Caco-2 (cell line): ENCODE measurements at regions of chr17 and their contacts with region 1.

Region 1: GRCh38 chr17:50956750-50957523 is 90.8 kb upstream of the TOB1 start:
- DNase-seq: peak; percentile 86 to 87
- H3K4me3 ChIP-seq: no peak overlapping the region
- H3K4me3 Mint-ChIP-seq: no peak overlapping the region
- H3K27ac Mint-ChIP-seq: no peak overlapping the region
- H3K4me1 ChIP-seq: peaks cover 9% of the 10 kb centered on the region
- H3K4me1 Mint-ChIP-seq: peaks cover 13% of the 10 kb centered on the region
- H3K27me3 ChIP-seq: no peaks in the 10 kb centered on the region
- H3K27me3 Mint-ChIP-seq: no peaks in the 10 kb centered on the region
- CTCF ChIP-seq: peak; percentile 96 to 98

Region 2: DNA sequence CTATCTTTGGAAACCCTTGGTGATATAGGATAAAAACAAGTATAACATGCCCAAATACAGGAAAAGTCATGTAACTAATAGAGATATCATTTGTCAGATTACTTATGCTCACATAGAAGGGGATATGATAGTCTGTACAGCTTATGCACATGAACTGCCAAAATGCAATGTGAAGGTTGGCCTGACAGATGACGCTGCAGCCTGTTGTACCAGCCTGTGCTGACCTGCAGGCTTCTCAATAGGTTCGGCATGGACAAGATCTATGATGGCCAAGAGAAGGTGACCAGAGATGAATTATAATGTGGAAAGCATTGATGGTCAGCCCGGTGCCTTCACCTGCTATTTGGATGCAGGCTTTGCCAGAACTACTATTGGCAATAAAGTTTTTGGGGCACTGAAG is 108.9 kb before region 1 on chr17:
- CTCF ChIA-PET with region 1: interaction called, 186 read pairs
- POLR2A ChIA-PET with region 1: interaction called, 14 read pairs
- intact Hi-C with region 1: loop called (anchors 1 kb)
- DNase-seq: peak in 1 of 2 experiments; percentile 29
- H3K4me3 ChIP-seq: no peak overlapping the region
- H3K4me3 Mint-ChIP-seq: no peak overlapping the region
- H3K27ac Mint-ChIP-seq: no peak overlapping the region
- H3K4me1 ChIP-seq: peaks cover 31% of the 10 kb centered on the region
- H3K4me1 Mint-ChIP-seq: peaks cover 19% of the 10 kb centered on the region
- H3K27me3 ChIP-seq: no peaks in the 10 kb centered on the region
- H3K27me3 Mint-ChIP-seq: no peaks in the 10 kb centered on the region
- CTCF ChIP-seq: no peak

Region 3: DNA sequence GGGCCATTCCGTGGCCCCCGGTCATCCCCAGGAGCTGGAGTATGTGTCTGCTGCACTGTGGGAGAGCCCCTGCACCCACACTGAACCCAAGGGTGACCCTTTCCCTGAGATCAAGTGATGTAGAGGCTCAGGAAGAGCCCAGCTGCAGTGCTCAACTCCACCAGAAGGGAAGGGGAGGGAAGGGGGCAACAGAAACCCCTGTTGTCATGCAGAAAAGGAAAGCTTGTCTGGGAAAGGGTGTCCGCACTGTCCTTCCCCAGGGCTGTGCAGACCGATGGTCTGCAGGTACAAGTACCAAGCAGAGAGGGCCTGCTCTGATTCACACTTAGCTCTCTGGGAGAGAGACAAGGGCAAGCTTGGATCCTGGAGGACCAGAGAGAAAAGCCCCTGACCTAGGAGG is 45.0 kb before region 1 on chr17:
- CTCF ChIA-PET with region 1: no interaction called
- POLR2A ChIA-PET with region 1: no interaction called
- intact Hi-C with region 1: no loop called
- DNase-seq: no peak
- H3K4me3 ChIP-seq: no peak overlapping the region
- H3K4me3 Mint-ChIP-seq: no peak overlapping the region
- H3K27ac Mint-ChIP-seq: no peak overlapping the region
- H3K4me1 ChIP-seq: peaks cover 42% of the 10 kb centered on the region
- H3K4me1 Mint-ChIP-seq: peaks cover 52% of the 10 kb centered on the region
- H3K27me3 ChIP-seq: no peaks in the 10 kb centered on the region
- H3K27me3 Mint-ChIP-seq: no peaks in the 10 kb centered on the region
- CTCF ChIP-seq: peak; percentile 13 to 55

Region 4: GRCh38 chr17:50993544-50993943 is 36.6 kb after region 1 on chr17:
- CTCF ChIA-PET with region 1: no interaction called
- POLR2A ChIA-PET with region 1: interaction called, 3 read pairs
- intact Hi-C with region 1: loop called (anchors 5 kb)
- DNase-seq: no peak
- H3K4me3 ChIP-seq: no peak overlapping the region
- H3K4me3 Mint-ChIP-seq: no peak overlapping the region
- H3K27ac Mint-ChIP-seq: no peak overlapping the region
- H3K4me1 ChIP-seq: no peaks in the 10 kb centered on the region
- H3K4me1 Mint-ChIP-seq: peaks cover 6% of the 10 kb centered on the region
- H3K27me3 ChIP-seq: no peaks in the 10 kb centered on the region
- H3K27me3 Mint-ChIP-seq: no peaks in the 10 kb centered on the region
- CTCF ChIP-seq: no peak

Region 5: DNA sequence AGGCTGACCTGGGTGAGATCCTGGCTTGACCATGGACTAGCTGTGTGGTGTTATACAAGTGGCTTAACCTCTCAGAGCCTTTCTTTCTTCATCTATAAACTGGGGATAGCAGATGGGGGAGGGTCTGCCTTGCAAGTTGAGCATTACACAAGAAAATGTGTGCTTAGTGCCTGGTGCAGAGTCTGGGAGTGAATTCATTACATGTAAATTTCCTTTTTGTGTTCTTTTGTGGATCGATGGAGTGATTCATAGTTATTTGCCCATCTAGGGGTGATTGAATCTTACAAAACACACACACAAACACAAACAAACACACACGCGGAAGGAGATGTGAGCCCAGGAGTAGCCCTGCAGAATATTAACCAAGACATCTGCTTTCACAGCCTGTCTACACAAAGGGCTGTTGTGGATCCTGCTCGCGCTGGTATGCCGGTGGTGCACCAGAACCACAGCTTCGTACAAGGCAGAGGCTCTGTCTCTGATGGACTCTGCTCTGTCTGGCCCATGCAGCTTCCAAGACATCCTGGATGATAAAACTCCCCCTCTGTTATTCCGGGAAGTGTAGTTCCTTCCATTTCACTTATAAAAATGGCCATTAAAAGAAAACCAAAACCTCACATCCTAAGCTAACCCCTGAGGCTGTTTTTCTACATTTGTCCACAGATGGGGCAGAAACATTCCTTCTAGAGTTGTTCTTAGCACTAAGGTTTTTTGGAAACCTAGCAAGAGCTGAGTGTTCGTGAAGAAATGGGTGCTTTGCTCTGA is 389.5 kb after region 1 on chr17:
- CTCF ChIA-PET with region 1: no interaction called
- POLR2A ChIA-PET with region 1: no interaction called
- intact Hi-C with region 1: no loop called
- DNase-seq: peak in 1 of 2 experiments; percentile 45
- H3K4me3 ChIP-seq: no peak overlapping the region
- H3K4me3 Mint-ChIP-seq: no peak overlapping the region
- H3K27ac Mint-ChIP-seq: no peak overlapping the region
- H3K4me1 ChIP-seq: no peaks in the 10 kb centered on the region
- H3K4me1 Mint-ChIP-seq: no peaks in the 10 kb centered on the region
- H3K27me3 ChIP-seq: no peaks in the 10 kb centered on the region
- H3K27me3 Mint-ChIP-seq: peaks cover 9% of the 10 kb centered on the region
- CTCF ChIP-seq: no peak